GM10248 (cell line): ENCODE measurements at regions of chr17 and their contacts with region 1.

Region 1: DNA sequence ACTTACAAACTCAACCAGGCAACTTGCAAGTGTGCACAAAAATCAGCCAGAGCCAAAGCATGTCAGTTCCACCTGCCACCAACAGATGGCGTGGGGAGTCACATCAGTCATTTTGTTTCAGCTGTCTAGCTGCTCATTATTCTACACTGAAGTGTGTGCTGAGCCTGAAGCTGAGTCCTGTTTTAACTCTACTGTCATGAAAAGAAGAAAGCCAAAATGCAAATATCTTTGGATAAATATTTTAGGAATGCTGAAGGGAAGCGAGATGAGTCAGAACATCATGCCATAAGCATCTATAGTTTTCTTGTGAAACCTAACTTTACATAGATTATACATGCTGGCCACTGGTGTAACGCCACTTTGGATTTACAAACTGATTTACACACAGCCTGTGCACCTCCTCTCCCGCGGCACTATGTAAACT is 172.6 kb downstream of the CDK5R1 start:
- DNase-seq: peak; percentile 79
- CTCF ChIP-seq: peak; percentile 75

Region 2: GRCh38 chr17:32648450-32648849 is 11.0 kb before region 1 on chr17:
- CTCF ChIA-PET with region 1: interaction called, 26 read pairs
- POLR2A ChIA-PET with region 1: no interaction called
- DNase-seq: no peak
- CTCF ChIP-seq: no peak

Region 3: GRCh38 chr17:32671896-32672295 is 12.5 kb after region 1 on chr17:
- CTCF ChIA-PET with region 1: interaction called, 33 read pairs
- POLR2A ChIA-PET with region 1: no interaction called
- DNase-seq: no peak
- CTCF ChIP-seq: no peak

Region 4: DNA sequence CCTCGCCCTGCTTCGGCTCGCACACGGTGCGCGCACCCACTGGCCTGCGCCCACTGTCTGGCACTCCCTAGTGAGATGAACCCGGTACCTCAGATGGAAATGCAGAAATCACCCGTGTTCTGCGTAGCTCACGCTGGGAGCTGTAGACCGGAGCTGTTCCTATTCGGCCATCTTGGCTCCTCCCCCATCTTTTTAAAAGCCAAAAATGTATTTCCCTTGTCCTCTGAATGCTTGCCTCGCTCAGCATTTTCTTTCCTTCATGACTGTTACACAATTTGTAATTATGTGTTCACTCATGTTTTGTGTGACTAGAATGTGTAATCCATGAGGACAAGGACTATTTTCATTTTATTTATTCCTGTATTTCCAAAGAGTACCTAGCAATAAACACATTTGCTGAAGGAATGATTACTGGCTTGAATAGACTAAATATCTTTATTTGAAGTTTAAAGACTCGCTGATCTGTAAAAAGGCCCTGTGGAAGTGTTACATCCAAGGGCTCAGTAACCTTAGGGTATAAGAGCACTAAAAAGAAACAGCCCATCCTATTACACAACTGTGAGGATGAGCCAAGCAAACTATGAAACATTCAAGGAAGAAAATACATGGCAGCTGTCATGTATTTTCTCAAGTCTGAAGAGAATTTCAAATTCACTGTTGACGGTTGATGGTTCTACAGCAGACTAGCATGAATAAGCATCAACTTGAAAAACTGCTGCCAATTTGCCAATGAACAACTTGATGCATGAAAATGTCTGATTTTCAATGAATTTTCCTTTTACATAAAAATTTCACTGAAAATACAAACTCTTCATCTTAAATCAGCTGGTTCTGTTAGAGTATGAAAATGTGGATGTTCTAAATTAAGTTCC is 24.9 kb after region 1 on chr17:
- CTCF ChIA-PET with region 1: interaction called, 14 read pairs
- POLR2A ChIA-PET with region 1: no interaction called
- DNase-seq: no peak
- CTCF ChIP-seq: no peak

Region 5: DNA sequence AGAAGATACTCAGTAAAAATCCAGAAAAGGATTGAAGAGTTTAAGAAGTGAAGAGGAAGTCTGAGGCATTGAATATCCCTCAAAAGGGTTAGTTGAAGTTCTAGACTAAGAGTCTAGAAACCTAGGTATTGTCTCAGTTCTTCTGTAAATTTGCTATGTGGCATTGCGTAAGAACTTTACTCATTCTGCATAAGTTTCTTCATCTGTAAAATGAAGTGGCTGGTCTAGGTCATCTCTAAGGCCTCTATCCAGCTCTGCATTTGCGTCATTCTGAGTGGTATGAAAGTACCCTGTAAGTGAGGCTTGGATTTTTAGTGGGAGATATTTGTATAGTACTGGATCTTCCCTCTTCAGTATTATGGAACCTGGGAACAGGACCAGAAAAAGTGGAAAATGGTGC is 87.3 kb after region 1 on chr17:
- CTCF ChIA-PET with region 1: no interaction called
- POLR2A ChIA-PET with region 1: no interaction called
- DNase-seq: no peak
- CTCF ChIP-seq: no peak